ENCODE measurements at regions of chr16 and their contacts with region 1.

Region 1: DNA sequence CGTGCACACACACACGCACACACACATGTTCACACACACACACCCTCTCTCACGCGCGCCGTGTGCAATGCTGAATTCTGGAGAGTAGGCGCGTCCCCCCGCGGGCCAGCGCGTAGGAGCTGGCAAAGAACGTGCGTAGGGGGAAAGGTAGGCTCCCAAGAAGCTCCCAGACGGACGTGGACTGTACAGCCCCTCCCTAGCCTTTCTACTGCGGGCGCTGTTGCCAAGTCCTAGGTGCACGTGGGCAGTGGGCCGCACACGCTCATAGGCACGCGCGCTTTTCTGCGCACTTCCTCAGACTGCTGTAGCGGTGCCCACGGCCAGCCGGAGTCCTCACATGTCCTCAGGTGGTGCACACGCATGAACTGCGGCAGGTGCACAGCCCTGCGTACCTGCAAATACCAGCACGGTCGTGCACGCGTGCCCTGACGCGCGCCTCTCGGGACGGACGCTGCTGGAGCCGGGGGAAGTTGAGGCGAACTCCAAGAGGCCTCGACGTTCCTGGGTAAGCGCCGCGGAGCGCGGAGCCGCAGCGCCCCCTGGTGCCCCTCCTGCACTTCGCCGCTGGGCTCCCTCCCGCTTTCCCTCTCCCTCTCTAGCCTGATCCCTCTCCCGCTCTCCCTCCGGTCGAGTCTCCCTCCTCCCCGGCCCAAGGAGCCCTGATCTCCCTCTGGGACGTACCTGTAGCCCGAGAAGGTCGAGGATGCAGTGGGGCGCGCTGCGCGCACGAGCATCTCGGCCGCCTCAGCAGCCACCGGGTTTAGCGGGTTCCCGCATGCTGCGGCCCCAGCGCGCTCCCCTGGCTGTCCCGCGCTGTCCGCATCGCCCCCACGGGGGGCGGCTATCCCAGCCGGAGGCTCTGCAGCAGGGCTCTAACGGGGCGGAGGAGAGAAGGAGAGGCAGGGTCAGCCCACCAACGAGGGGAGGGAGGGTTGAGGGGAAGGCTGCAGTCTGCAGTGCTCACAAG is 749 bp downstream of the GRIN2A start:
- DNase-seq: peak; percentile 69
- ATAC-seq: peak; percentile 96

Region 2: DNA sequence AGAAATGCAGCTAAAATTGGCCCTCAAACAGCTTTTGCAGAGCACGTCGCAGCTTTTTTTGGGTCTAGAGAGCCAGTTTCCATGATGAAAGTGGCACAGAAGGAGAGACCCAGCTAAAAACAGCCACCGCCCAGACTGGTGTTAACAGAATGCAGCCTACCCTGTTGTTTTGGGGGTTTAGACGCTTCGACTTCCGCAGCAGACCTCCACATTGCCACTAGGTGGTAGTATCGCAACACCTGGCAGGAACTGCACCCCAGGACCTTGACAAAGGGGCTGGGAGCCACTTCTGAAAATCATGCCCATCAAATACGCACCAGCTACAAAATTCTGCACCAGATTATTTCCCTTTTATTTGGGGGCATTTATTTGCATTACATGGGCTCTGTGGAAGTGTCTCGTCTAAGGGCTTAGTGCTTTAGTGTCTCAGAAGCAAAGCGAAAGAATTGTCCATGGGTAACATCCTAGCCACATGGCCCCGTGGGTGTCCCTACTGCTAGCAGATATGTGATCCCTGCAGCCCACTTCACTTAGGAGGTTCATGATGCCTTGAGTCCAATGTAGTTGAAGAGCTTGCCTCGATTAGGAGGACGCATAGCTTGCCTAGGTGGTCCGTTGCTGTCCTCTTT is 922.9 kb before region 1 on chr16:
- intact Hi-C with region 1: loop called (anchors 10 kb)
- DNase-seq: no peak
- ATAC-seq: peak; percentile 66

Region 3: DNA sequence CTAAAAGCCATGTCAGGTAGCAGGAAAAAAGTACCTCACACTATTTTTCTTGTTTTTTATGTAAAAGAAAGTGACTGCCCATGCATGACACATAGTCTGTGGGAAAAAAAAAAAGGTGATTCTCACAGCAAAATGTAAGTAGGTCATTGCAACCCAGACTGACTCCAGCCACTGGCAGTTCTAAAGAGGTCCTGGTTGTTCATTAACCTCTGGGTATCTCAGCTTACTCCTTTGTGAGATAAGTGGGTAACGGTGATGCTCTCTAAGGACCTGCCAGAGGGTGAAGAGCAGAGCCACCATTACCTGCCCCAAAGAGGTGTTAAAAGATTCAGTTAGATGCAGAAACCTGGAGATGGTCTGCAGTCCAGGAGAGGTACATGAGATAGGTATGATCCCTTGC is 531.2 kb before region 1 on chr16:
- intact Hi-C with region 1: loop called (anchors 10 kb)
- DNase-seq: no peak
- ATAC-seq: no peak

Region 4: GRCh38 chr16:10067406-10067805 is 114.1 kb before region 1 on chr16:
- intact Hi-C with region 1: no loop called
- DNase-seq: no peak
- ATAC-seq: no peak

Measured in Right ventricle myocardium superior (tissue), 1 donor.